ENCODE measurements at regions of chr6 and their contacts with region 1.

Region 1: GRCh38 chr6:97497713-97498331 is 214.8 kb upstream of the MMS22L start:
- DNase-seq: peak; percentile 29
- H3K4me3 Mint-ChIP-seq: no peak overlapping the region
- H3K27ac Mint-ChIP-seq: no peak overlapping the region
- H3K4me1 Mint-ChIP-seq: no peaks in the 10 kb centered on the region
- H3K27me3 Mint-ChIP-seq: peaks cover 11% of the 10 kb centered on the region

Region 2: DNA sequence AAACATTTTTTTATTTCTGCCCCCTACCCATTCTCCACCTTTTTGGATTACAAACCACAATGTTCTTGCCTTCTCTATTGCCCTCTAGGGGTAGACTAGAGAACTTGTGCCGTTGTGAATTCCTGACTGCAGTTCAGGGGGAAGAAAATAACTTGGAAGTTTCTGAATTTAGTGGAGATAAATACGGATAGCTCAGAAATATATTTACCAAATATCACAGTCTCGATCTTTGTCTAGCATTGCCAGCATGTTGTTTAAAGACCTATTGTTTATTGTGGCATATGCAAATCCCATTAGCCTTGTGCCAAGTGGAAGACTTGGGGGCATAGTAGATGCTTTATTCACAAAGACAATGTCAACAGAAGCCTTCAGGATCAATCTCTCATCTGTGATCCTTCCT is 60.7 kb before region 1 on chr6:
- intact Hi-C with region 1: no loop called
- DNase-seq: no peak
- H3K4me3 Mint-ChIP-seq: no peak overlapping the region
- H3K27ac Mint-ChIP-seq: no peak overlapping the region
- H3K4me1 Mint-ChIP-seq: no peaks in the 10 kb centered on the region
- H3K27me3 Mint-ChIP-seq: peaks cover 3% of the 10 kb centered on the region

Region 3: GRCh38 chr6:97689078-97689754 is 191.4 kb after region 1 on chr6:
- intact Hi-C with region 1: no loop called
- DNase-seq: no peak
- H3K4me3 Mint-ChIP-seq: no peak overlapping the region
- H3K27ac Mint-ChIP-seq: no peak overlapping the region
- H3K4me1 Mint-ChIP-seq: no peaks in the 10 kb centered on the region
- H3K27me3 Mint-ChIP-seq: no peaks in the 10 kb centered on the region

Region 4: DNA sequence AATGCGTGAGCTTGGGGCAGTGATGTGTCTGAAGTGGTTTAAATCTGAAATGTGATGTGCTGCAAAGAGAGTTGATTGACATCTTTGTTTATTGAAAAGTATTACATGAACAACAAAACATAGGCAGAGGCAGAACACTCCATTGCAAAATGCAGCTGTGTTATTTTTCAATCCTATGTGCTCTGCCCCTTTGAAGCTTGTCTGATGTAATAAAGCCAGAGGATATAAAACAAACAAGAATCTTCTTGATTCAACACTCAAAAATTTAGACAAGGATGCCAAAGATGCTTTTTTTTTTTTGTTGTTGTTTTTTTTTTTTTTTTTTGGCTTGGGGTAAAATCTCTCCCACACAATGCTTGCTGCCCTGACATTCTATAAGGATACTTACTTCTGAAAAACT is 267.7 kb after region 1 on chr6:
- intact Hi-C with region 1: no loop called
- DNase-seq: no peak
- H3K4me3 Mint-ChIP-seq: no peak overlapping the region
- H3K27ac Mint-ChIP-seq: no peak overlapping the region
- H3K4me1 Mint-ChIP-seq: no peaks in the 10 kb centered on the region
- H3K27me3 Mint-ChIP-seq: no peaks in the 10 kb centered on the region

Region 5: DNA sequence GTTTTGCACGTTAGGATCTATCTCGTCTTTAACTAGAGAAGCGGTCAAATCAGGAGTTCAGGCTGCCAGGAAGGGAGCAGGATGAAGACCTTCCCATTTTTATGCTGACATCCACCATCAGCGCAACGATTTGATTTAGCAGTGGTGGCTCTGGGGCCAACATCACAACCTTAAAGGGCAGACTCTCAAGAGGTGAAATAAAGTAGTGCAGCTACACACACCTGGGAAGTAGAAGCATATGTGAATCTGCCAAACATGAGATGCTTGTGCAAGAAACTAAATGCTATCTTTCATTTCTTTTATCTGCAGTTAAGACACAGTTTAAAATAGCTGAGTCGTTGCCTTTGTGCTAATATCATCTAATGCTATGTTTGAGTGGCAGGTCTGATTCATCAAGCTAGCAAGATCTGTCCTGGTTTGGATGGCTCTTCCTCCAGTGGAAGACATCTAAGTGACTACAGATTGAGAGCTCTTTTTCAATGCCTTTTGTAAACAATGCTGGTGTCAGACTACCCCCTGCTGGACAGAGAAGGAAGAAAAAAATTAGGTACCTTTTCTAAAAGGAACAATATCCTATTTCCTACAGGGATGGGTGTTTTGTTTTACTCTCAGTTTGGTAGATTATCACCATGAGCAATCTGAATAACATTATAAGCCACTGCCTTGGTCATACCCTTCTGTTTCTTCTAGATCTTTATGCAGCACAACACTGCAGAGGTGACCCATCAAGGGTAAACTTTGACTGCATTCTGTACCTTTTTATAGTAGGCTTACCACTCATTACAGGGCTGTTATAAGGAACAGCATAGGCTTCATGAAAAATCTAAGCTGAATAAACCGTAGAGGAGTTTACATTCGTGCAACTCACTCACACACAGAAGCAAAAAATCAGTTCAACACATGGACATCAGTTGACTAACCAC is 1621.5 kb after region 1 on chr6:
- intact Hi-C with region 1: loop called (anchors 5 kb)
- DNase-seq: no peak
- H3K4me3 Mint-ChIP-seq: no peak overlapping the region
- H3K27ac Mint-ChIP-seq: no peak overlapping the region
- H3K4me1 Mint-ChIP-seq: no peaks in the 10 kb centered on the region
- H3K27me3 Mint-ChIP-seq: peaks cover 19% of the 10 kb centered on the region